Prostate gland (tissue), 2 donors: ENCODE measurements at regions of chr3 and their contacts with region 1.

Region 1: GRCh38 chr3:72447059-72447946 is 400.9 kb downstream of the SHQ1 start:
- DNase-seq: peak; percentile 92
- H3K4me3 ChIP-seq: peak overlapping the region; percentile 82 to 90
- H3K27ac ChIP-seq: peak overlapping the region; percentile 93 to 94
- H3K4me1 ChIP-seq: no peaks in the 10 kb centered on the region
- H3K27me3 ChIP-seq: no peaks in the 10 kb centered on the region
- CTCF ChIP-seq: peak in 1 of 4 experiments; percentile 29
- POLR2A ChIP-seq: no peak

Region 2: DNA sequence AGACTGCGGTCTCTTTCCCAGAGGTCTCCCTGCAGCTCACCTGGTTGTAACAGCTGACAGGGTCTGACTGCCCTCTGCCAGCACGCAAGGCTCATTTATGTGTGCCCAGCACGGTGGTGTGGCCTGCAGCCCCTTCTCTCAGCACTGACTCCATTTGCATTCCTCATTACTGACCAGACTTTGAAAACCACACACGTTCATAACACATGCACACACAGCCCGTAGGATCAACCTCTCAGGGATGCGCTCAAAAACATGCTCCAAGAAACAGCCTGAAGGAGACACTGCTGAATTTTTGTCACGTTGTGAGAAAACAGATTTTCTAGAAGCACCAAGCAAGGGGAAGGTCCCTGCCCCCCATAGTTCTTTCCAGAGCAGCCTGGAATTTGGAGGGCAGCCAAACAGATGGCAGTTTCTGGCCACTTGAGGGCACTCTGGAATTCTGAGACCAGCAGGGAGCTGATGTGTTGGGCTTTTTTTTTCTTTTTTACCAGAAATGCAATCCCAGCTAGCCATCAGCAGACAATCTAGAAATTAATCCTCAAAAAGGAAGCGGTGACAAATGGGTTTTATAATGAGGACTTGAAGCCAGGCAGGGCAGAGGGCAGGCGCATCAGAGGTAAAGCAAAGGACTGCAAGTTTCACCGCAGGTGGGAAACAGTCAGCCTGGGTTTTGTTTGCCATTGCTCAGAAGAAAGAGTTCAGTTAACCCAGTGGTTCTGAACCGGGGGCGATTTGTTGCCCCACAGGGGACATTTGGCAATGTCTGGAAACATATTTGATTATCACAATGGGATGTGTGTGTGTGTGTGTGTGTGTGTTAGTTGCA is 491.8 kb before region 1 on chr3:
- intact Hi-C with region 1: loop called (anchors 10 kb)
- DNase-seq: peak; percentile 67
- H3K4me3 ChIP-seq: no peak overlapping the region
- H3K27ac ChIP-seq: no peak overlapping the region
- H3K4me1 ChIP-seq: no peaks in the 10 kb centered on the region
- H3K27me3 ChIP-seq: no peaks in the 10 kb centered on the region
- CTCF ChIP-seq: peak; percentile 58 to 78 (median 69)
- POLR2A ChIP-seq: no peak

Region 3: GRCh38 chr3:72123908-72124441 is 323.3 kb before region 1 on chr3:
- intact Hi-C with region 1: loop called (anchors 10 kb)
- DNase-seq: peak; percentile 93
- H3K4me3 ChIP-seq: no peak overlapping the region
- H3K27ac ChIP-seq: no peak overlapping the region
- H3K4me1 ChIP-seq: no peaks in the 10 kb centered on the region
- H3K27me3 ChIP-seq: no peaks in the 10 kb centered on the region
- CTCF ChIP-seq: no peak
- POLR2A ChIP-seq: no peak

Region 4: GRCh38 chr3:72152551-72153476 is 294.5 kb before region 1 on chr3:
- intact Hi-C with region 1: loop called (anchors 5 kb)
- DNase-seq: peak; percentile 85
- H3K4me3 ChIP-seq: no peak overlapping the region
- H3K27ac ChIP-seq: peak overlapping the region; percentile 58
- H3K4me1 ChIP-seq: peaks cover 6% of the 10 kb centered on the region
- H3K27me3 ChIP-seq: no peaks in the 10 kb centered on the region
- CTCF ChIP-seq: no peak
- POLR2A ChIP-seq: no peak

Region 5: GRCh38 chr3:72234391-72234790 is 212.9 kb before region 1 on chr3:
- intact Hi-C with region 1: loop called (anchors 5 kb)
- DNase-seq: peak; percentile 33
- H3K4me3 ChIP-seq: no peak overlapping the region
- H3K27ac ChIP-seq: no peak overlapping the region
- H3K4me1 ChIP-seq: peaks cover 11% of the 10 kb centered on the region
- H3K27me3 ChIP-seq: no peaks in the 10 kb centered on the region
- CTCF ChIP-seq: no peak
- POLR2A ChIP-seq: no peak

Region 6: GRCh38 chr3:72270072-72270681 is 177.1 kb before region 1 on chr3:
- intact Hi-C with region 1: loop called (anchors 10 kb)
- DNase-seq: peak; percentile 65
- H3K4me3 ChIP-seq: no peak overlapping the region
- H3K27ac ChIP-seq: no peak overlapping the region
- H3K4me1 ChIP-seq: peaks cover 2% of the 10 kb centered on the region
- H3K27me3 ChIP-seq: no peaks in the 10 kb centered on the region
- CTCF ChIP-seq: no peak
- POLR2A ChIP-seq: no peak

Region 7: DNA sequence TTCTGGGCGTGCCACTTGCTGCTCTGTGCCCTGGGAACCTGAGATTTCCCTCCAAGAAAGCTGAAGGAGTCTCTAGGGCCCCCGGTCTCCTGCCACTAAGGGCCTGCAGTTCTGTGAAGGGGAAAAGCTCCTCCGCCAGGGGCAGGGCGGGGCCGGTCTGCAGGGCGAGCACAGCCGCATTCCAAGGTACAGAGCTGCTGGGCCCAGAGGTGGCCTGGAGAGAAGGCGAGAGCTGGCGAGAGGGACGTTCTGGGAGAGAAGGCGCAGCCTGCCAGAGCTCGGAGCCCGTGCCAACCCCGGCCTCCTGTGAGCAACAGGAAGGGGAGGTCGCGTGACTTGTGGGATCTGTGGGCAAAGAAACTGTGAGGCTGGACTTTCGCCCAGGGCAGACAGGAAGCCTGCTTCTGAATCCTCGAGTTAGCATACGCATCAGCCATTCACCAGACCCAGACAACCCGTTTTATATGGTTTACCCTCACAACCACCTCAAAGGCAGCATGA is 99.4 kb before region 1 on chr3:
- intact Hi-C with region 1: loop called (anchors 10 kb)
- DNase-seq: peak; percentile 95
- H3K4me3 ChIP-seq: no peak overlapping the region
- H3K27ac ChIP-seq: peak overlapping the region in 1 of 2 donors; percentile 15
- H3K4me1 ChIP-seq: peaks cover 7% of the 10 kb centered on the region
- H3K27me3 ChIP-seq: no peaks in the 10 kb centered on the region
- CTCF ChIP-seq: peak in 3 of 4 experiments; percentile 23 to 49 (median 30)
- POLR2A ChIP-seq: no peak

Region 8: DNA sequence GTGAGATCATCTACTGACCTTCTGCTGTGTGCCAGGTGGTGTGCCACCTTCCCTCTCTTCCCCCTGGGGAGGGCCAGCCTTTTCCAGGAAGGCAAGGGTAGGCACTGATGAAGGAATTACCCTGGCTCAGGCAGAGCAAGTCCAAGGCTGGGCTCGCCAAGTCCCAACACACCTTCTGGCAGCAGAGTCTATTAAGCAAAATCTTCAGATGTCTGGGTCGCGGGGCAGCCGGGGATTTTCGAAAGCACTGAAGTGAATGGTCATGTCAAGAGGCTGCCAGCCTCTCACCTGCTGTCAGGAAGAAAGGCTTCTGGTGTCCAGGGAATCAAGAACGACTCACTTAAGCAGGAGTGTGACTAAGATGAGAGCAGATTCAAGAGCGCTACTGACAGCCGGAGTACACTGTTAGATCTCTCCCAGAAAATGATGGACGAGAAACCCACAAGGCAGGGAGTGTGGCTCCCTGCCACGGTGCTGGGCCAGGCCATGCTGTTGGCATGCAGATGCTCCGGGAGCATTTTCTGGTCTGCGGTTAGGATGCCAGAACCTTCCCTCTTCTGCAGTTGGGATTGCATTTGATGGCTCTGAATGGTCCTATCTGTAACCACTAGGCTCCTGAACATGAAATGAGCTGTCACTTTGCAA is 78.8 kb before region 1 on chr3:
- intact Hi-C with region 1: no loop called
- DNase-seq: no peak
- H3K4me3 ChIP-seq: no peak overlapping the region
- H3K27ac ChIP-seq: no peak overlapping the region
- H3K4me1 ChIP-seq: no peaks in the 10 kb centered on the region
- H3K27me3 ChIP-seq: no peaks in the 10 kb centered on the region
- CTCF ChIP-seq: no peak
- POLR2A ChIP-seq: no peak